ENCODE measurements at regions of chr18 and their contacts with region 1.

Region 1: GRCh38 chr18:59249205-59249774 is 24.0 kb downstream of the RAX start:
- DNase-seq: peak; percentile 66
- H3K4me3 Mint-ChIP-seq: no peak overlapping the region
- H3K27ac Mint-ChIP-seq: no peak overlapping the region
- H3K4me1 Mint-ChIP-seq: no peaks in the 10 kb centered on the region
- H3K27me3 Mint-ChIP-seq: peaks cover 54% of the 10 kb centered on the region

Region 2: GRCh38 chr18:59148192-59148591 is 101.1 kb before region 1 on chr18:
- CTCF ChIA-PET with region 1: no interaction called
- intact Hi-C with region 1: no loop called
- DNase-seq: no peak
- H3K4me3 Mint-ChIP-seq: no peak overlapping the region
- H3K27ac Mint-ChIP-seq: peak overlapping the region; percentile 9
- H3K4me1 Mint-ChIP-seq: peaks cover 45% of the 10 kb centered on the region
- H3K27me3 Mint-ChIP-seq: no peaks in the 10 kb centered on the region

Region 3: DNA sequence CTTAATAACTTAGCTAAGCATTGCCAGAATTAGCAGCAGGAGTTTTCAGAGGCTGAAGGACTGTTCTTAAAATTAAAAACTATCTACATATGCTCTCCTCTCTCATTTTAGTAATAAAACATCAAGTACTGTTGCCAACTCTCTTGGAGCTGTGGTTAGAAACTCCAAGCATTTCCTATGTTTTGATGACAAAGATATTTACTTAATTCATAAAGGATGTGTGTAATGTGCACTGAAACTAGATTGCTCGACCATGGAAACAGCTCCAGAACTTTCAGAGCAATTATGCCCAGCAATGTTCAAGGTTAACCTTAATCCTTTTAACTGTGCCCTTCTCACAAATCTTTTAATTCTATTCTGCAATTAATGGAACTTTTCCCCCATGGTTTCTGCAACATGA is 20.9 kb before region 1 on chr18:
- CTCF ChIA-PET with region 1: interaction called, 10 read pairs
- intact Hi-C with region 1: no loop called
- DNase-seq: no peak
- H3K4me3 Mint-ChIP-seq: no peak overlapping the region
- H3K27ac Mint-ChIP-seq: no peak overlapping the region
- H3K4me1 Mint-ChIP-seq: no peaks in the 10 kb centered on the region
- H3K27me3 Mint-ChIP-seq: peaks cover 38% of the 10 kb centered on the region

Region 4: DNA sequence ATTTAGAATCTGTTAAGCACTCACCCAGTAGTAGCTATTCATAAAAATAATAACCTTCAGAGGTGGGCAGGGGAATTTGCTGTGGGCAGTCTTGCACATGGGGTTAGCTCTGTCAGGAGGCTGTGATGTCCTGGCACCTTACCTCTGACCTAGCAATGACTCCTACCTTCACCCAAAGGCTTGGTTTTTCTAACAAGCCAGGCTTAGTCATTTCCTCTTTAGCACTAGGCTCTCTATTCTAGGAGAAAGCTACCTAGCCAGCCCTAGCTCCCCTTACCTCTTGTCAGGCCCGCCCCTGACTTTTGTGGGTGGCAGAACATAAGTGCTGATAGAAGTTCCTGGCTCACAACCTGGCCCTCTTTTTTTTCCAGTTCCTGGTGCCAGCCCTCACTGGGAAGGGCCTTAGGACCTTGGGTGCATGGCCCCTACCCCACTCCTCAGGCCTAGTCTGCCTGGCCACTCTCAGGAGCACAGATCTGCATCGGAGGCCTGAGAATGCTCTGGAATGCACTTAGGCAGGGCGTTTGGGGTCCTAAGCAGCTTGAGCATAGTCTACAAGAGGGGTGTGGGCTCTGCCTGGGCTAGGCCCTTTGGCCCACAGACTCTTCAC is 51.5 kb after region 1 on chr18:
- CTCF ChIA-PET with region 1: interaction called, 13 read pairs
- intact Hi-C with region 1: no loop called
- DNase-seq: peak; percentile 11
- H3K4me3 Mint-ChIP-seq: no peak overlapping the region
- H3K27ac Mint-ChIP-seq: no peak overlapping the region
- H3K4me1 Mint-ChIP-seq: no peaks in the 10 kb centered on the region
- H3K27me3 Mint-ChIP-seq: peaks cover 7% of the 10 kb centered on the region

Region 5: DNA sequence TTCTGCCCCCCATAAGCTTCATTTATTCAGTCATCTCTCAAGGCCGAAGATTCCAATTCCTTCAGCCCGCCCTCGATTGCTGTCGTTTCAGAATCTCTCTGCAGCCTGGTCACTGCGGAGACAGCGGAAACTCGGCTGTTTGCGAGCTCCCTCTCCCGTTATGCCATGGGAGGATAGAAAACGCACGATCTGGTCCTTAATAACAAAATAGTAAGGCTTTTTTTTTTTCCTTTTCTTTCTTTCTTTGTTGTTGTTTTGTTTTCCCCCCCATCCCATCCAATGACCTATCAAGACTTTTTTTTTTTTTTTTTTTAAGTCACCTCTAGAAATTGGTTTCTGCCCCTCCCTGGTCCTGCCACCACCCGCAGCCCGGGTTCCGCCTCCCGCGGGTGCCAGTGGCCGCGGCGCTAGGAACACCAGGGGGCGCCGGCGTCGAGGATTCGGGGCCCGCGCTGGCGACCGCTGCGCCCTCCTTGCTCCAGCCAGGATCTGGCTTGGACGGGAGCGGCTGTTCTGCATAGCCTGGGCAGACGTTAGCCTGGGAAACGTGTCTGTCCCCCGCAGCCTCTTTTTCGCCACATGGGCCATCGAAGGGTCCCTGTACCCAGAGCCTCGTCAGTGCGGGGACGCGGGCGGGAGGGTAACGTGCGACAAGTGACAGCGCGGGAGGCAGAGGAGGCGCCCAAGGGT is 59.1 kb after region 1 on chr18:
- CTCF ChIA-PET with region 1: interaction called, 22 read pairs
- intact Hi-C with region 1: loop called (anchors 1 kb)
- DNase-seq: peak; percentile 67
- H3K4me3 Mint-ChIP-seq: peak overlapping the region; percentile 48
- H3K27ac Mint-ChIP-seq: no peak overlapping the region
- H3K4me1 Mint-ChIP-seq: no peaks in the 10 kb centered on the region
- H3K27me3 Mint-ChIP-seq: peaks cover 29% of the 10 kb centered on the region